GM10248 (cell line): ENCODE measurements at regions of chr15 and their contacts with region 1.

Region 1: GRCh38 chr15:78131295-78132061 is at the start of gene CIB2:
- DNase-seq: peak; percentile 94
- CTCF ChIP-seq: peak; percentile 84

Region 2: DNA sequence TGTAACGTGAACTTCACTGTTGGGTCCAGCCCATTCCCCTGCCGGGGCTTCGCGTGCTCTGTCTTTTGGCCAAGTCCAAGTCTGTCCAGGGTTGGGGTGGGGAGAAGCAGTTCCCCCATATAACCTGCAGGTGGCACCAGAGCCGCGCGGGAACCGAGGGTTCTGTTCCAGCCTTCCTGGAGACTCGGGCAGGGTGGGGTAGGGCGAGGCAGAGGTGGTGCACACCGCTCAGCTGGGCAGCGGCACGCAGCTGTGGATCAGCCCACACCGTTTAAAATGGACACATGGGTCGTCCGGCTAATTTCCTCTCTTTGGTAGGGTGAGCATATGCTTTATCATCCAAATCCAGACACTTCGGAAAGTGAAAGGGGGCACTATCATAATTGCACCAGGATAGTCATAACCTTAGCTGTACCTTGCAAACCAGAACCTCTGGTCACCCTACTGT is 172.0 kb before region 1 on chr15:
- CTCF ChIA-PET with region 1: interaction called, 10 read pairs
- POLR2A ChIA-PET with region 1: no interaction called
- DNase-seq: peak; percentile 85
- CTCF ChIP-seq: peak; percentile 96

Region 3: DNA sequence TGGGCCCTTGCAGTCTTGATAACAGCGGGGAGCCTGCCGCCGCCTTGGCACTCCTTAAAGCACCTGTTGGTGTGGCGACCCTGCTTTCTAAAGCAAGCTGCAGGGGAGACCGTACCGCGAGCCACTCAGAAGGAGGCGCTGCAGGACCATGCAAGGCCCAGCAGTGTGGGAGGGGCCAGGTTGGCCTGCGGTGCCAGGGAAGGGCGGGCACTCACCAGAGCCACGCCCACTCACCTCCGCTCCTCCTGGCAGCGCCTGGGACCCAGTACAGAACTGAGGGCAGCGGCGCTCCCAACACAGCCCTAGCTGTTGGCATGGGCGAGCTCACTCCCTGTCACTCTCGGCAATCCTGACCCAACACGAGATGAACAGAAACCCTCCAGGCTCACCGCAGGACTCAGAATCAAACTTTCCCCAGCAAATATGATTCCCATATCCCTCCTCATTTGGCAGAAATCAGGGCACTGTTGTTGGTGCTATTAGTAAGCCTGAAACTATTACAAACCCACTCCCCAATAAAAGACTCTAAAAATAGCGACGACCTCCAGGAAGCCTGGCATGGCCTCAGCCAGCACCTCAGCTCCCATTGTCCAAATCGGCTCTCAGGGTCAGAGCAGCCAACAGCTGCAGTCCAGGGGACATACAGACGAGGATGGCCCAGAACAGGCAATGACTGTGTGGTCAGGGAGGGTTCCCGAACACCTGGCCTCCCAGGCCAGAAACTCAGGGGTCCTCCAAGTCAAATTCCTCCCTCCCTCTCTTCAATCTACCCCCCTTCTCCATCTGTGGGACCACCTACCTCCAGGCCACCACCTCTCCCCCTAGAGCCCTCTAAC is 131.2 kb before region 1 on chr15:
- CTCF ChIA-PET with region 1: no interaction called
- POLR2A ChIA-PET with region 1: no interaction called
- DNase-seq: peak; percentile 77
- CTCF ChIP-seq: peak; percentile 67

Region 4: DNA sequence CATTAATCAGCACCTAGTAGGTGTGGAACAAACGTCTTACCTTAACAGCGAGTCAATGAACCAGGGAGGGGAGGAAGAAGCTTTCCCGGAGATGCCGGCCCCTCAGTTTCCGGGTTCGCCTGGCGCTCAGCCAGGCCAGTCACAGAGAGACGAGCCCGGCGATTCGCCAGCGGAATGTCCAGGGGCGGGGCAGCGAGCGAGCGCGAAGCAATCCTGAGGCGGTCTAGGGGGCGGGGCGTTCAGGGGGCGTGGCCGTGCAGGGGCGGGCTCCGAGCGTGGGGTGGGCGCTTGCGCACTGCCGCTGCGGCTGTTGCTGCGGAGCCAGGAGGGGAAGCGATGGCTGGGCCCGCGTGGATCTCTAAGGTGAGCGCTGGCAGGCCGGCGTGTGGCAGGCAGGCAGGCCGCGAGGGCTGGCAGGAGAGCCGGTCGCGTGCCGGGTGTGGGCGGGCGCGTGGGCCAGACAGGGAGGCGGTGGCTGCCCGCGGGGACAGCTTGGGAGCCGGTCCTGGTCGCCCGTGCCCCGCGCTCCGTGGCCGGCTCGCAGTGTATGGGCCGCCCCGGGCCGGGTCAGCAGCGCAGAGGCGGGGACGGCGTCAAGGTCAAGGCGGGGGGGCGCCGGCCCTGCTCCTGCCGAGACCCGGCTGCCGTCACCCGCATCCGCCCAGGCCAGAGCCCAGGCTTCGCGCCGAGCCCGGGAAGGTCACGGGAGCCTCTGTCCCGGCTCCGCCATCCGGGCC is 17.8 kb after region 1 on chr15 and contains the start of gene IDH3A:
- CTCF ChIA-PET with region 1: interaction called, 18 read pairs
- POLR2A ChIA-PET with region 1: no interaction called
- DNase-seq: peak; percentile 99
- CTCF ChIP-seq: no peak

Region 5: GRCh38 chr15:78170848-78171773 is 39.6 kb after region 1 on chr15:
- CTCF ChIA-PET with region 1: interaction called, 45 read pairs
- POLR2A ChIA-PET with region 1: no interaction called
- DNase-seq: peak; percentile 64
- CTCF ChIP-seq: no peak

Region 6: DNA sequence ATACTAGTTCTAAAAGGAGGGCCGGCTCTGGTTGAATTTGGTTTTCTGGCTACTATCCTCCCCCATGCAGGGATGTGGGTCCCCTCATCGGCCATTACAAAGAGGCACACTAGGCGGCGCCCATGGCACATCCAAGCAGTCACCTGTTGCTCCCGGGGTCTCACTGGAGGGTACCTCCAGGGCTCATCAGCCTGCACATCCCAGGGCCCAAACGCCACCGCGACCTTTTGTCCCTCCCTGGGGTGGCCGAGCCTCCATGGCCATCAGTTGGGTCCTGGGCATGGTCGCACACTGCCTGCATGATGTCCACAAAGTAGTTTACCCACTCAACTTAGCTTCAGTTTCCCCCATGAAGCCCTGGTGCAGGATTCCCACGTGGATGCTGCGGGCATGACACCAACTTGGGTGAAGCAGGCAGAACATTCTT is 46.0 kb after region 1 on chr15:
- CTCF ChIA-PET with region 1: interaction called, 45 read pairs
- POLR2A ChIA-PET with region 1: no interaction called
- DNase-seq: peak; percentile 71
- CTCF ChIP-seq: peak; percentile 63

Region 7: GRCh38 chr15:78212546-78213424 is 81.3 kb after region 1 on chr15:
- CTCF ChIA-PET with region 1: interaction called, 10 read pairs
- POLR2A ChIA-PET with region 1: no interaction called
- DNase-seq: no peak
- CTCF ChIP-seq: no peak